Caco-2 (cell line): ENCODE measurements at regions of chr2 and their contacts with region 1.

Region 1: GRCh38 chr2:25991965-25992364 is 9.7 kb upstream of the KIF3C start:
- DNase-seq: no peak
- H3K4me3 ChIP-seq: no peak overlapping the region
- H3K4me3 Mint-ChIP-seq: no peak overlapping the region
- H3K27ac Mint-ChIP-seq: peak overlapping the region; percentile 5
- H3K4me1 ChIP-seq: peaks cover 12% of the 10 kb centered on the region
- H3K4me1 Mint-ChIP-seq: peaks cover 23% of the 10 kb centered on the region
- H3K27me3 ChIP-seq: no peaks in the 10 kb centered on the region
- H3K27me3 Mint-ChIP-seq: no peaks in the 10 kb centered on the region
- CTCF ChIP-seq: no peak

Region 2: GRCh38 chr2:26011990-26012856 is 20.3 kb after region 1 on chr2:
- CTCF ChIA-PET with region 1: interaction called, 25 read pairs
- POLR2A ChIA-PET with region 1: interaction called, 11 read pairs
- intact Hi-C with region 1: loop called (anchors 1 kb)
- DNase-seq: peak; percentile 91 to 96
- H3K4me3 ChIP-seq: peak overlapping the region; percentile 4
- H3K4me3 Mint-ChIP-seq: peak overlapping the region; percentile 55
- H3K27ac Mint-ChIP-seq: peak overlapping the region; percentile 91
- H3K4me1 ChIP-seq: peaks cover 40% of the 10 kb centered on the region
- H3K4me1 Mint-ChIP-seq: peaks cover 45% of the 10 kb centered on the region
- H3K27me3 ChIP-seq: no peaks in the 10 kb centered on the region
- H3K27me3 Mint-ChIP-seq: no peaks in the 10 kb centered on the region
- CTCF ChIP-seq: no peak

Region 3: GRCh38 chr2:26033818-26034636 is 42.1 kb after region 1 on chr2 and contains the start of gene RAB10:
- CTCF ChIA-PET with region 1: interaction called, 8 read pairs
- POLR2A ChIA-PET with region 1: no interaction called
- intact Hi-C with region 1: loop called (anchors 1 kb)
- DNase-seq: peak; percentile 100
- H3K4me3 ChIP-seq: peak within 1 kb of the TSS; percentile 76
- H3K4me3 Mint-ChIP-seq: peak within 1 kb of the TSS; percentile 76
- H3K27ac Mint-ChIP-seq: peak within 1 kb of the TSS; percentile 60
- H3K4me1 ChIP-seq: 0 out of 2 replicates have a peak, but pooled peaks cover 15% of the 10 kb centered on the region
- H3K4me1 Mint-ChIP-seq: peaks cover 18% of the 10 kb centered on the region
- H3K27me3 ChIP-seq: no peaks in the 10 kb centered on the region
- H3K27me3 Mint-ChIP-seq: no peaks in the 10 kb centered on the region
- CTCF ChIP-seq: no peak
- total RNA-seq, gene RAB10: 203 and 213 TPM in 2 replicates

Region 4: DNA sequence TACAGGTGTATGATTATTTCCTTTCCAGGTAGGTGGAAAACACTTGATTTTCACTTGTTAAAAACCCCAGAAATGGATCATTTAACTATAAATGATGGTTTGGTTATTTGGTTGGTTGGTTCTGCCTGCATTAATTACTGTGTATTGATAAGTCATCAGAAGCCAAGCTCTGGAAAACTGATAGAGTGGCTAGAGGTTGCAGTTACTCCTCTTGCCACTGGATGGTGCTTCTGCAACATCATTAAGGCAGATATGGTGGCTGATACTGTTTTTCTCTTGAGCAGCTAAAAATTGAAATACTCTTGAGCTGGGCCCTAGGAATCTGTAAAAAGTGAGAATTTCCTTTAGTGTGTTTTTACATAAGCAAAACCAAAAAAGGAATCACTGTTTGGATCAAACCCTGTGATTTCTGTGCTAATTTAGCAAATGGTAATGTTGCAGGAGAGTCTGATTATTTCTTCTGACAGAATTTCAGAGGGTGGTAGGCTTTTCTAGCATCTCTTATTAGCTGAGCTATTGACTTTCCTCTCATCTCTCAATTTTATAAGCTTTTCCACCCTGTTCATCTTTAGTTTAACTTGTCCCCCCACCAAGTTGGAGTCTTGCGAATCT is 96.2 kb after region 1 on chr2:
- CTCF ChIA-PET with region 1: interaction called, 14 read pairs
- POLR2A ChIA-PET with region 1: no interaction called
- intact Hi-C with region 1: no loop called
- DNase-seq: peak in 1 of 2 experiments; percentile 34
- H3K4me3 ChIP-seq: no peak overlapping the region
- H3K4me3 Mint-ChIP-seq: no peak overlapping the region
- H3K27ac Mint-ChIP-seq: no peak overlapping the region
- H3K4me1 ChIP-seq: no peaks in the 10 kb centered on the region
- H3K4me1 Mint-ChIP-seq: peaks cover 14% of the 10 kb centered on the region
- H3K27me3 ChIP-seq: no peaks in the 10 kb centered on the region
- H3K27me3 Mint-ChIP-seq: no peaks in the 10 kb centered on the region
- CTCF ChIP-seq: peak; percentile 76 to 78

Region 5: GRCh38 chr2:26144953-26145680 is 153.2 kb after region 1 on chr2:
- CTCF ChIA-PET with region 1: interaction called, 28 read pairs
- POLR2A ChIA-PET with region 1: no interaction called
- intact Hi-C with region 1: loop called (anchors 1 kb)
- DNase-seq: peak; percentile 70 to 77
- H3K4me3 ChIP-seq: no peak overlapping the region
- H3K4me3 Mint-ChIP-seq: no peak overlapping the region
- H3K27ac Mint-ChIP-seq: no peak overlapping the region
- H3K4me1 ChIP-seq: 0 out of 2 replicates have a peak, but pooled peaks cover 11% of the 10 kb centered on the region
- H3K4me1 Mint-ChIP-seq: peaks cover 18% of the 10 kb centered on the region
- H3K27me3 ChIP-seq: no peaks in the 10 kb centered on the region
- H3K27me3 Mint-ChIP-seq: peaks cover 3% of the 10 kb centered on the region
- CTCF ChIP-seq: peak; percentile 73 to 87